ENCODE measurements at regions of chr19 and their contacts with region 1.

Region 1: GRCh38 chr19:10403137-10404021 is at the start of gene CDC37:
- DNase-seq: peak; percentile 80
- ATAC-seq: peak; percentile 84
- H3K4me3 ChIP-seq: peak within 1 kb of the TSS; percentile 95
- H3K27ac ChIP-seq: peak within 1 kb of the TSS; percentile 82
- H3K4me1 ChIP-seq: peaks cover 34% of the 10 kb centered on the region
- H3K27me3 ChIP-seq: peaks cover 0 to 3% of the 10 kb centered on the region in 2 experiments; a peak in 2 of 4 replicates
- CTCF ChIP-seq: no peak
- EP300 ChIP-seq: no peak
- POLR2A ChIP-seq: peak; percentile 98
- RAD21 ChIP-seq: no peak
- polyA plus RNA-seq, gene CDC37: 4.7 to 8.8 TPM

Region 2: DNA sequence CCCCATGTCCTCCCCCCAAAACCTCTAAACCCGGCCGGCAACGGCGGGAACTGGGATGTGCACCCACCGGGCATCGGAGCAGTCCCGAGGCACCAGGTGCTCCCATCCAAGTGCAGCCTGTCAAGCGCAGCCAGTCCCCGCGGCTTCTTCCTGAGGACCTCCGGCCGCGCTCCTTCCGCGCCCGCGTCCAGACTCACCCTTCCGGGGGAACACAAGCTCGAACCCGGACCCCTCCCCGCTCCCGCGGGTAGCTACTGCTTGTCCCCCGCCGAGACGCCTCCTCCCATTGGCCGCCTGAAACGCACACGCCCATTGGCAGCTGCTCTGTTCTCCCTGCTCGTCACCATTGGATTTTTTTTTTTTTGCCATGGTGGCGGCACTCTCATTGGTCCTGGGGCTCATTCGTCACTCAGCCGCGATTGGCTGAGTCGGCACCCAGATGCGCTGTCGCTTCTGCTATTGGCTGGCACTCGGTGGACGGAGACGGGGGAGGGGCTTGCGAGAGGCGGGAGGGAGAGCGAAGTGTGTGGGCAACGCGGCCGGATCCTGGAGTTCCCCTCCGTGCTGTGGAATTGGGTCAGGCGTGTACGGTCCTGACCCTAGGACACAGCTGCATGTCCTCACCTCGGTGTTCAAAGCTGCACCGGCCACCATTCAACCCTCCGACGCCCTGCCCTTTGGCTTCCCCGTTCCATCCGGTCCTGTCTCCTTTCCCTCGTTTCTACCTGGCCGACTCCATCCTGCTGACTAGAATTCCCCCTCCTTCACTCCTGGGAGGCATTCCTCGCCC is 22.9 kb before region 1 on chr19 and contains the start of gene TYK2:
- CTCF ChIA-PET with region 1: no interaction called
- POLR2A ChIA-PET with region 1: interaction called, 6 read pairs
- RAD21 ChIA-PET with region 1: interaction called, 4 read pairs
- SMC1A ChIA-PET with region 1: interaction called, 3 read pairs
- in situ Hi-C with region 1: no loop called
- intact Hi-C with region 1: loop called (anchors 1 kb)
- DNase-seq: peak; percentile 99
- ATAC-seq: peak; percentile 97
- H3K4me3 ChIP-seq: peak within 1 kb of the TSS; percentile 95
- H3K27ac ChIP-seq: peak within 1 kb of the TSS; percentile 87
- H3K4me1 ChIP-seq: peaks cover 10% of the 10 kb centered on the region
- H3K27me3 ChIP-seq: no peaks in the 10 kb centered on the region
- CTCF ChIP-seq: no peak
- EP300 ChIP-seq: peak; percentile 6 to 55; a peak in 3 of 4 replicates
- POLR2A ChIP-seq: peak; percentile 92
- RAD21 ChIP-seq: no peak
- polyA plus RNA-seq, gene TYK2: 36.4 to 66.9 TPM

Region 3: DNA sequence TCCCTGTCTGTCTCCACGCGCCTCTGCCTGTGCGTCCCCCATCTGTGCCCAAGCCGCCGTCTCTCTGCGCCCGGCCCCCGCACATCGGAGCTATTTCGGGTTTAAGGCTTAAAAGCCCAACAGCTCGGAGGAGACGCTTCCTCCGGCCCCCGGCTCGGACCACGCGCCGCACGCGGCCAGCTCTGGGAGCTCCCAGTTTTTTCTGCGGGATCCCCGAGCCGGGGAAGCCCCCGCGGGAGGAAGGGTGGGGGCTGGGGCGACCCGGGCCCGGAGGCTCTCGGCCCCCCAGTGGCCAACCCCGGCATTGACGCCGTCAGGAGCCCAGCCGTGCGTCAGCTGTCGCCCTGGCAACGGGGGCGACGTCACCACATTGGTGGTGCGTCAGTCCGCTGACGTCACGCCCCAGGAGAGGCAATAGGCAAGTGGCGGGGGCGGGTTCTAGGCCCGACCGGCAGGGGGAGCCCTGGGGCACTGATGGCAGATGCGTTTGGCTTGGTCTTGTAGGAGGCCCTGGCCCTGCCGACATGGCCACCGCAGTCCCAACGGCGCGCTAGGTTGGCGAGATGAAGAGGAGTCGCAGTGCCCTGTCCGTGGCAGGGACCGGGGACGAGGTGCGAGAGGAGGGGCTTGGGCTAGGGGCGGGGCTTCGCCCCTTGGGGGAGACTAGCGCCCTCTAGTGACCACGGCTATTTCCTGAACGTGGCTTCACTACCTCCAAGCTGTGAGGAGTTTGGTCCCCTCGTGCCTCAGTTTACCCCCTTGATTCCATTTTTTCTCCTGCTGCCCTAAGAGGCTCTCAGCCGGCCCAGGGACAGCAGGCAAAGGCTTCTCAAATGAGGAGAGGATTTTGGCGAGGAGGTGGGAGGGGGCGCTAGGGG is 13.2 kb after region 1 on chr19:
- CTCF ChIA-PET with region 1: interaction called, 1,053 read pairs
- POLR2A ChIA-PET with region 1: interaction called, 122 read pairs
- RAD21 ChIA-PET with region 1: interaction called, 209 read pairs
- SMC1A ChIA-PET with region 1: interaction called, 364 read pairs
- in situ Hi-C with region 1: no loop called
- intact Hi-C with region 1: no loop called
- DNase-seq: peak; percentile 60
- ATAC-seq: peak; percentile 53
- H3K4me3 ChIP-seq: peak overlapping the region; percentile 71
- H3K27ac ChIP-seq: peak overlapping the region; percentile 72
- H3K4me1 ChIP-seq: peaks cover 51% of the 10 kb centered on the region
- H3K27me3 ChIP-seq: peaks cover 0 to 16% of the 10 kb centered on the region in 2 experiments; a peak in 3 of 4 replicates
- CTCF ChIP-seq: peak; percentile 80 to 86 (median 81)
- EP300 ChIP-seq: peak in 1 of 2 experiments; percentile 74; a peak in 2 of 4 replicates
- POLR2A ChIP-seq: no peak; the same call in 1 of the 2 replicates
- RAD21 ChIP-seq: peak; percentile 41; the same call in 1 of the 2 replicates

Region 4: GRCh38 chr19:10431943-10432735 is 28.8 kb after region 1 on chr19:
- CTCF ChIA-PET with region 1: interaction called, 1,053 read pairs
- POLR2A ChIA-PET with region 1: interaction called, 78 read pairs
- RAD21 ChIA-PET with region 1: interaction called, 34 read pairs
- SMC1A ChIA-PET with region 1: interaction called, 364 read pairs
- in situ Hi-C with region 1: no loop called
- intact Hi-C with region 1: loop called (anchors 2 kb)
- DNase-seq: no peak
- ATAC-seq: peak; percentile 66
- H3K4me3 ChIP-seq: peak overlapping the region; percentile 54; the same call in 1 of the 2 replicates
- H3K27ac ChIP-seq: peak overlapping the region; percentile 56; the same call in 1 of the 2 replicates
- H3K4me1 ChIP-seq: peaks cover 41% of the 10 kb centered on the region
- H3K27me3 ChIP-seq: peaks cover 0 to 4% of the 10 kb centered on the region in 2 experiments; a peak in 1 of 4 replicates
- CTCF ChIP-seq: no peak
- EP300 ChIP-seq: no peak
- POLR2A ChIP-seq: no peak
- RAD21 ChIP-seq: no peak

Region 5: GRCh38 chr19:10502524-10503001 is 99.2 kb after region 1 on chr19:
- CTCF ChIA-PET with region 1: interaction called, 3 read pairs
- POLR2A ChIA-PET with region 1: no interaction called
- RAD21 ChIA-PET with region 1: no interaction called
- SMC1A ChIA-PET with region 1: no interaction called
- in situ Hi-C with region 1: no loop called
- intact Hi-C with region 1: loop called (anchors 10 kb)
- DNase-seq: peak; percentile 61
- ATAC-seq: peak; percentile 90
- H3K4me3 ChIP-seq: peak overlapping the region; percentile 77
- H3K27ac ChIP-seq: peak overlapping the region; percentile 99
- H3K4me1 ChIP-seq: peaks cover 25% of the 10 kb centered on the region
- H3K27me3 ChIP-seq: no peaks in the 10 kb centered on the region
- CTCF ChIP-seq: no peak
- EP300 ChIP-seq: peak in 1 of 2 experiments; percentile 39; a peak in 1 of 4 replicates
- POLR2A ChIP-seq: peak; percentile 95
- RAD21 ChIP-seq: no peak

Measured in GM12878 (cell line).